HCT116 (cell line): ENCODE measurements at regions of chr5 and their contacts with region 1.

Region 1: DNA sequence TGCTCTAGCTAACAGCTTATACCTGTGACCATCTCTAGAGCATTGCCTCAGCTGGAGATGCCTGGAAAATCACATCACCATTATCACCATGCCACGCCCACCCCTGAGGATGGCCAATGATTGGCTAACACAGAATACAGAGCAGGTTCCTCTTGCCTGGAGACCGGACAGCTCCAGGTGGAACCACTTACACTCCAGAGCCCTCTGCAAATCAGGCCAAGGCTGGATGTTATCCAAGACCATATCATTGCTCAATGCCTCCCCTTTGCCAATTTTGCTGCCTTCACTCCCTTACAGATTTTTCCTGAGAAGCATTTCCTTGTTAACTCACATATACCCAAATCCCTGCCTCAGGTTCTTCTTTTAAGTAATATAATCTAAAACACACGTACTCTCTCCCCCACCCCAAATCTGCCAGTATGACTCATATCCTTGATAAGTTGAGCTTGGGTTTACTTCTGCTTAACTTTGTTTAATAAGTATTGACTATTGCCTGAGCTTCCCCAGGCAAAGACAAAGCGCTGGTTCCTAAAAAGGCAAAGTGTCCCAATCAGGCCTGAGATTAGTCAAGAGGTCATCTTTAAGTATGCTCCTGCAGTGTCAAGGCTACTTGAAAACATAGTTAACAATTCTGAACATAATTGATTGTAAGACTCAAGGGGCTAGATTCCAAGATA is 309.6 kb downstream of the EPB41L4A start:
- DNase-seq: peak; percentile 12
- ATAC-seq: peak; percentile 77
- H3K4me3 ChIP-seq: no peak overlapping the region
- H3K27ac ChIP-seq: no peak overlapping the region
- H3K4me1 ChIP-seq: no peaks in the 10 kb centered on the region
- H3K27me3 ChIP-seq: no peaks in the 10 kb centered on the region
- CTCF ChIP-seq: no peak
- POLR2A ChIP-seq: no peak
- RAD21 ChIP-seq: no peak

Region 2: DNA sequence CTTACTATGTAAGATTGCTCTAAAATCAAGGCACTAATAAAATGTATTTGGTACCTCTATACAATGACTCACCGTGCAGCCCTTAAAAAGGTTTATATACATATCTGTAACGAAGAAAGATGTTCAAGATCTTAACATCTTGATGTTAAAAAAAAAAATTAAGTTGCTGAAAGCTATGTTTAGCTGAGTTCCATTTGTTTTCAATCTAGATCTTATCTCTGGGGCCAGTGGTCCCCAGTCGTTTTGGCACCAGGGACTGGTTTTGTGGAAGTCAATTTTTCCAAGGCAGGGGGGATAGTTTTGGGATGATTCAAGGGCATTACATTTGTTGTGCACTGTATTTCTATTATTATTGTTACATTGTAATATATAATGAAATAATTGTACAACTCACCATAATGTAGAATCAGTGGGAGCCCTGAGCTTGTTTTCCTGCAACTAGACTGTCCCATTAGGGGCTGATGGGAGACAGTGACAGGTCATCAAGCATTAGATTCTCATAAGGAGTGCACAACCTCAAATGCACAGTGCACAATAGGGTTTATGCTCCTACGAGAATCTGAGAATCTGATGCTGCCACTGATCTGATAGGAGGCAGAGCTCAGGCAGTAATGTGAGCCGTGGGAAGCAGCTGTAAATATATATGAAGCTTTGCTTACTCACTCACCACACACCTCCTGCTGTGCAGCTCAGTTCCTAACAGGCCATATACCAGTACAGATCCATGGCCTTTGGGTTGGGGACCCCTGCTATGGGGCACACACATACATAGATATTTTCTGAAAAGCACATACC is 1065.6 kb before region 1 on chr5:
- CTCF ChIA-PET with region 1: no interaction called
- POLR2A ChIA-PET with region 1: no interaction called
- RAD21 ChIA-PET with region 1: no interaction called
- intact Hi-C with region 1: loop called (anchors 10 kb)
- DNase-seq: no peak
- ATAC-seq: no peak
- H3K4me3 ChIP-seq: no peak overlapping the region
- H3K27ac ChIP-seq: no peak overlapping the region
- H3K4me1 ChIP-seq: no peaks in the 10 kb centered on the region
- H3K27me3 ChIP-seq: 0 out of 2 replicates have a peak, but pooled peaks cover 3% of the 10 kb centered on the region
- CTCF ChIP-seq: no peak
- POLR2A ChIP-seq: no peak
- RAD21 ChIP-seq: no peak

Region 3: GRCh38 chr5:112533362-112533761 is 423.9 kb after region 1 on chr5:
- CTCF ChIA-PET with region 1: no interaction called
- POLR2A ChIA-PET with region 1: no interaction called
- RAD21 ChIA-PET with region 1: no interaction called
- intact Hi-C with region 1: no loop called
- DNase-seq: peak; percentile 21
- ATAC-seq: peak; percentile 53; the same call in 1 of the 2 replicates
- H3K4me3 ChIP-seq: no peak overlapping the region
- H3K27ac ChIP-seq: no peak overlapping the region
- H3K4me1 ChIP-seq: peaks cover 0 to 8% of the 10 kb centered on the region in 2 experiments; a peak in 1 of 4 replicates
- H3K27me3 ChIP-seq: no peaks in the 10 kb centered on the region
- CTCF ChIP-seq: no peak
- POLR2A ChIP-seq: no peak
- RAD21 ChIP-seq: no peak